A549 (cell line): ENCODE measurements at regions of chr19 and their contacts with region 1.

Region 1: DNA sequence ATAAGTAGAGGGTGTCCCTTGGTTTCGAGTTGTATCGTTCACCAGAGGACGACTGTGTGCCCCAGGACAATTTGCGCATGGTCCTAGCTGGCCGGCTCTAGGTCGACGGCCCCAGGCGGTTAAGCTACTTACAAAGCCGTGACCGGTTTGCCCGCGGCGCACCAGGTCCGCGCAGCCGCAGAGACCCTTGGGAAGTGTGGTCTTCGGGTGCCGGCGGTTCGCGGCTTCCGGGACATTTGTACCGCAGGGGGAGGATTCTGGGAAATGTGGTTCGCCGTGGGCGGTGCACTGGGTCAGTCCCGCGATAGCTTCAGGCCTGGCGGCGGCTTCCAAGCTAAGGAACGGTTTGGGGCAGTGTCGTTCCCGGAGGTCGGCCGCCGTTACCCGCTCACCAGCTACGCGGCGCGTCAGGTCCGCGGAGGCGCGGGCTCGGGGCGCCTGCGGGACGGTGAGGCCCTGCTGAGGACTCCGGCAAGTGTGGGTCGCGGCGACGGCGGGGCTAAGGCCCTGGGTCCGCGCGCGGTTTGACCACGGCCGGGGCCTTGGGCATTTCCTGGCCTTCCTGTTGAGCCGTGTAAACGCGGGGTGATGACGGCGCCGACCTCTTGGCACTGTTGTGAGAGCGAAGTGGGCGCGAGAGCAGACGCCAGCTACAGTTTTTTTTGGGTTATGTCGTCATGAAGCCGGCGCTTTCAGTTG is at the start of gene ZNF302:
- DNase-seq: peak; percentile 99 to 100
- ATAC-seq: peak; percentile 97 to 98
- H3K4me3 ChIP-seq: peak within 1 kb of the TSS; percentile 67
- H3K27ac ChIP-seq: peak within 1 kb of the TSS; percentile 82 to 90
- H3K4me1 ChIP-seq: no peaks in the 10 kb centered on the region
- CTCF ChIP-seq: no peak
- EP300 ChIP-seq: no peak
- POLR2A ChIP-seq: peak; percentile 79
- RAD21 ChIP-seq: no peak
- polyA plus RNA-seq, gene ZNF302: 54.6 and 56.3 TPM in 2 replicates

Region 2: GRCh38 chr19:34712395-34713261 is 35.1 kb after region 1 on chr19:
- CTCF ChIA-PET with region 1: interaction called, 12 read pairs
- POLR2A ChIA-PET with region 1: no interaction called
- DNase-seq: peak; percentile 77 to 90
- ATAC-seq: peak; percentile 75 to 95; a peak in 5 of 6 replicates
- H3K4me3 ChIP-seq: no peak overlapping the region
- H3K27ac ChIP-seq: no peak overlapping the region
- H3K4me1 ChIP-seq: no peaks in the 10 kb centered on the region
- CTCF ChIP-seq: peak; percentile 93
- EP300 ChIP-seq: no peak
- POLR2A ChIP-seq: no peak
- RAD21 ChIP-seq: peak; percentile 94 to 97

Region 3: DNA sequence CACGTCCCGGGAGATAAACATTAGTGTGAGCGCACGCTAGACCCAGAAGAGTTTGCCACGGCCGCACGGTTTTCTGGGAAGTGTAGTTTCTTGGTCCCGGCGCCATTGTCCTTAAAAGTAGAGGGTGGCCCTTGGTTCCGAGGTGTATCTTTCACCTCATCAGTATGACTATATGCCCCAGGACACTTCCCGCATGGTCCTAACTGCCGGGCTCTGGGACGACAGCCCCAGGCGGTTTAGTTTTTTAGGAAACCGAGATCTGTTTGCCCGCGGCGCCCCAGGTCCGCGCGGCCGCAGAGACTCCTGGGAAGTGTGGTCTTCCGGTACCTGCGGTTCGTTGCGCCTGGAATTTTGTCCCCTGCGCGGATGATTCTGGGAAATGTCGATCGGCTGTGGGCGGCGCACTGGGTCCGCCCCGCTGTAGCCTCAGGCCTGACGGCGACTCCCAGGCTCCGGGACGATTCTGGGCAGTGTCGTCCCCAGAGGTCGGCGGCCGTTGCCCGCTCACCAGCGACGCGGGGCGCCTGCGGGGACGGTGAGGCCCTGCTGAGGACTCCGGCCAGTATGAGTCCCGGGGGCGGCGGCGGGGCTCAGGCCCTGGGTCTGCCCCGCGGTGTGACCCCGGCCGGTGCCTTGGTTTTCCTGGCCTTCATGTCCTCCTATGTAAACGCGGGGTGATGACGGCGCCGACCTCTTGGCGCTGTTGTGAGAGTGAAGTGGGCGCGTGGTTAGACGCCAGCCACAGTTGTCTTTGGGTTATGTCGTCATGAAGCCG is 56.5 kb after region 1 on chr19 and contains the start of gene ZNF181:
- CTCF ChIA-PET with region 1: interaction called, 3 read pairs
- POLR2A ChIA-PET with region 1: interaction called, 20 read pairs
- DNase-seq: peak; percentile 98
- ATAC-seq: peak; percentile 92 to 96
- H3K4me3 ChIP-seq: peak within 1 kb of the TSS; percentile 67
- H3K27ac ChIP-seq: peak within 1 kb of the TSS; percentile 93
- H3K4me1 ChIP-seq: peaks cover 4% of the 10 kb centered on the region; the same call in 1 of the 3 replicates
- CTCF ChIP-seq: peak; percentile 4; the same call in 1 of the 3 replicates
- EP300 ChIP-seq: no peak
- POLR2A ChIP-seq: peak; percentile 90
- RAD21 ChIP-seq: peak in 1 of 2 experiments; percentile 38; a peak in 2 of 5 replicates
- polyA plus RNA-seq, gene ZNF181: 19.3 and 24.6 TPM in 2 replicates

Region 4: GRCh38 chr19:34999498-35000341 is 322.2 kb after region 1 on chr19 and contains the start of gene GRAMD1A:
- CTCF ChIA-PET with region 1: no interaction called
- POLR2A ChIA-PET with region 1: interaction called, 20 read pairs
- DNase-seq: peak; percentile 98 to 99
- ATAC-seq: peak; percentile 73 to 77
- H3K4me3 ChIP-seq: peak within 1 kb of the TSS; percentile 91
- H3K27ac ChIP-seq: peak within 1 kb of the TSS; percentile 94 to 95
- H3K4me1 ChIP-seq: peaks cover 80% of the 10 kb centered on the region
- CTCF ChIP-seq: no peak
- EP300 ChIP-seq: peak; percentile 6 to 58; a peak in 3 of 5 replicates
- POLR2A ChIP-seq: peak; percentile 64
- RAD21 ChIP-seq: peak in 1 of 2 experiments; percentile 28; a peak in 2 of 5 replicates
- polyA plus RNA-seq, gene GRAMD1A: 184 and 221 TPM in 2 replicates